Activated CD8-positive, alpha-beta T cell treated with anti-CD3 and anti-CD28 coated beads, Interleukin-2, amount 10 ng/mL, durations not matched to agents 7 days and 5 days (primary cell): ENCODE measurements at regions of chrX and their contacts with region 1.

Region 1: GRCh38 chrX:153539171-153539978 is 21.9 kb downstream of the ATP2B3 start:
- DNase-seq: peak; percentile 63
- ATAC-seq: peak; percentile 91
- H3K4me3 Mint-ChIP-seq: no peak overlapping the region
- H3K27ac Mint-ChIP-seq: no peak overlapping the region
- H3K4me1 Mint-ChIP-seq: no peaks in the 10 kb centered on the region
- H3K27me3 Mint-ChIP-seq: no peaks in the 10 kb centered on the region

Region 2: GRCh38 chrX:152941328-152942106 is 597.9 kb before region 1 on chrX:
- CTCF ChIA-PET with region 1: interaction called, 10 read pairs
- POLR2A ChIA-PET with region 1: no interaction called
- DNase-seq: peak; percentile 92
- ATAC-seq: peak; percentile 98
- H3K4me3 Mint-ChIP-seq: peak overlapping the region; percentile 85
- H3K27ac Mint-ChIP-seq: peak overlapping the region; percentile 64
- H3K4me1 Mint-ChIP-seq: peaks cover 15% of the 10 kb centered on the region
- H3K27me3 Mint-ChIP-seq: no peaks in the 10 kb centered on the region

Region 3: GRCh38 chrX:153554519-153555167 is 15.3 kb after region 1 on chrX:
- CTCF ChIA-PET with region 1: interaction called, 11 read pairs
- POLR2A ChIA-PET with region 1: no interaction called
- DNase-seq: peak; percentile 70
- ATAC-seq: peak; percentile 61
- H3K4me3 Mint-ChIP-seq: no peak overlapping the region
- H3K27ac Mint-ChIP-seq: no peak overlapping the region
- H3K4me1 Mint-ChIP-seq: peaks cover 4% of the 10 kb centered on the region
- H3K27me3 Mint-ChIP-seq: no peaks in the 10 kb centered on the region

Region 4: GRCh38 chrX:153627675-153628111 is 88.3 kb after region 1 on chrX:
- CTCF ChIA-PET with region 1: no interaction called
- POLR2A ChIA-PET with region 1: no interaction called
- DNase-seq: no peak
- ATAC-seq: no peak
- H3K4me3 Mint-ChIP-seq: no peak overlapping the region
- H3K27ac Mint-ChIP-seq: no peak overlapping the region
- H3K4me1 Mint-ChIP-seq: no peaks in the 10 kb centered on the region
- H3K27me3 Mint-ChIP-seq: no peaks in the 10 kb centered on the region

Region 5: DNA sequence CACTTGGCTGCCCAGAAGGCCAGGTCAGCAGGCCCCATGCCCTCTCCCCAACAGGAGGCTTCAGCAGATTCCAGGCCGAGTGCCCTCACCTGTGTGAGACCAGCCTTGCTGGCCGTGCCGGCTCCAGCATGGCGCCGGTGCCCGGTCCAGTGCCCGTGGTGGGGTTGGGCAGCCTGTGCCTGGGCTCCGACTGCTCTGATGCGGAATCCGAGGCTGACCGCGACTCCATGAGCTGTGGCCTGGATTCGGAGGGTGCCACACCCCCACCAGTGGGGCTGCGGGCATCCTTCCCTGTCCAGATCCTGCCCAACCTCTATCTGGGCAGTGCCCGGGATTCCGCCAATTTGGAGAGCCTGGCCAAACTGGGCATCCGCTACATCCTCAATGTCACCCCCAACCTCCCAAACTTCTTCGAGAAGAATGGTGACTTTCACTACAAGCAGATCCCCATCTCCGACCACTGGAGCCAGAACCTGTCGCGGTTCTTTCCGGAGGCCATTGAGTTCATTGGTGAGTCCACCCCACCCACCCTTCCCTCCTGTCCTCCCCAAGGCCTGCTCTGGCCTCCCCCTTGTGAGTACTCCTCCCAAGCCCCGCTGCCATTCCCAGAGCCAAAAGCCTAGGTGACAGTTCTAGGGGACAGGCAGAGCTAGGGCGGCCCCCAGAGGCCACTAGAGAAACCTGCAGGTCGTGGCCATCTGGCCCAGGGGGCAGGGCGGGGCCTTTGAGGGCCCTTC is 110.0 kb after region 1 on chrX:
- CTCF ChIA-PET with region 1: interaction called, 13 read pairs
- POLR2A ChIA-PET with region 1: no interaction called
- DNase-seq: peak; percentile 44
- ATAC-seq: peak; percentile 72
- H3K4me3 Mint-ChIP-seq: no peak overlapping the region
- H3K27ac Mint-ChIP-seq: no peak overlapping the region
- H3K4me1 Mint-ChIP-seq: no peaks in the 10 kb centered on the region
- H3K27me3 Mint-ChIP-seq: peaks cover 24% of the 10 kb centered on the region

Region 6: DNA sequence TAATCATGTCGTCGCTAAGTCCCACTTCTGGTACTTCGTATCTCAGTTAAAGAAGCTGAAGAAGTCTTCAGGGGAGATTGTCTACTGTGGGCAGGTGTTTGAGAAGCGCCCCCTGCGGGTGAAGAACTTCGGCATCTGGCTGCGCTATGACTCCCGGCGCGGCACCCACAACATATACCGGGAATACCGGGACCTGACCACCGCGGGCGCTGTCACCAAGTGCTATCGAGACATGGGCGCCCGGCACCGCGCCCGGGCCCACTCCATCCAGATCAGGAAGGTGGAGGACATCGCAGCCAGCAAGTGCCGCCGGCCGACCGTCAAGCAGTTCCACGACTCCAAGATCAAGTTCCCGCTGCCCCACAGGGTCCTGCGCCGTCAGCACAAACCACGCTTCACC is 122.9 kb after region 1 on chrX:
- CTCF ChIA-PET with region 1: interaction called, 48 read pairs
- POLR2A ChIA-PET with region 1: no interaction called
- DNase-seq: peak; percentile 61
- ATAC-seq: no peak
- H3K4me3 Mint-ChIP-seq: peak overlapping the region; percentile 34
- H3K27ac Mint-ChIP-seq: no peak overlapping the region
- H3K4me1 Mint-ChIP-seq: no peaks in the 10 kb centered on the region
- H3K27me3 Mint-ChIP-seq: peaks cover 26% of the 10 kb centered on the region

Region 7: GRCh38 chrX:153667956-153668396 is 128.6 kb after region 1 on chrX:
- CTCF ChIA-PET with region 1: interaction called, 48 read pairs
- POLR2A ChIA-PET with region 1: no interaction called
- DNase-seq: peak; percentile 81
- ATAC-seq: peak; percentile 85
- H3K4me3 Mint-ChIP-seq: peak overlapping the region; percentile 73
- H3K27ac Mint-ChIP-seq: no peak overlapping the region
- H3K4me1 Mint-ChIP-seq: peaks cover 9% of the 10 kb centered on the region
- H3K27me3 Mint-ChIP-seq: peaks cover 14% of the 10 kb centered on the region